Heart right ventricle (tissue), 16 donors: ENCODE measurements at regions of chr3 and their contacts with region 1.

Region 1: DNA sequence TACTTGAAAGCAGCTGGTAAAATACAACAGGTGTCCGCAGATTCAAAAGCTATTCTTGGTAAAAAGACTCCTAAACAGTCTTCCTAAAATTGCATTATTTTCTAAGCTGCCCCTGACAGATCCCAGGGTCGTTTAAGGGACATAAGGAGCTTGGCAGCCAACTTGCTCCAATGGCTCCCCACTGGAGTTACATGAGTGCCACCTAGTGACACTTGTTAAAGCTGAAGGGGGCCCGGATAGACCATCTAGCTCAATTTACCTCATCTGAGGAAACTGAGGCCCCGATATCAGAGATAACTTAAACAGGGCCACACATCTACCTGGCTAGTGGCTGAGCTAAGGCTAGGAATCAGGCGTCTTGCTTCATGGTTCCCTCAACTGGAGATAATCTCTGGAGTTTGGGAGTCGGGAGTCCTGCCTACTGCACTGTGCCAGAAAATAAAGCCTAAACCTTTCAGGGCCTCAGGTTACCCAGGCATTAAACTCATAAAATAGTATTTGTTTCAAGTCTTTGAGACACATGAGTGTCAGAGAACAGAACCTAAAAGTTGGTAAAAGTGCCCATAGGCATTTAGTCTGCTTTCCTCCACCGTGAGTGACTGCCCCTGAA is 6.5 kb upstream of the TBC1D23 start:
- DNase-seq: peak; percentile 25 to 79
- ATAC-seq: peak; percentile 85 to 96 (median 92)
- H3K4me3 ChIP-seq: no peak overlapping the region
- H3K27ac ChIP-seq: peak overlapping the region in 6 of 10 donors; percentile 22 to 74 (median 53)
- H3K4me1 ChIP-seq: peaks cover 0 to 28% (median 8%) of the 10 kb centered on the region in 9 donors
- H3K27me3 ChIP-seq: no peaks in the 10 kb centered on the region
- CTCF ChIP-seq: peak; percentile 73 to 93 (median 84)

Region 2: DNA sequence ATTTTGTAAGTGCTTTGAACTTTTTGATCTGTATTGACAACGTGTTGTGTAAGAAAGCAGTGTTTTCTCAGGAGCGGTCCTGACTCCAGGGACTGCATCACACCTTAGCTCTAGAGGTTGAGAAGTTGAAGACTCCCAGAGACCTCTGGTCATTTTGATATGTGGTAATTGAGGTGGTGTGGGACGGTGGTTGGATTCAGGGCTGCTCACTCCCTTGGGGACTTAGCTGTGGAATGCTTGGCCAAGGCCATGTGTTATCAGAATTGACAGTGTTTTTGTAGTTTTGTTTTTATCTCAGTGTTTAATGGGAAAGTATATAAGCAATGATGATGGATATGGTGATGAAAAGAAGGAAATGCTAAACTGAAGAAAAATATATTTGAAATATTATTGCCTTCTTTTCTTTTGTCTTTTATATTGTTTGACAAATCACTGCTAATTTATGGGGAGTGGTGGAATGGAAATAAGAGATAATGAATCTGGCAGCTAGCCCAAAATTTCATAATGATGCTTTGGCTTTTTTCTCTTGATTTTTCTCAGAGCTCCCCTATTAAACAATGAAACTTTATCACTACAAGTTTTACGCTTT is 420.6 kb before region 1 on chr3:
- intact Hi-C with region 1: loop called in 5 of 10 experiments (anchors 1 to 5 kb)
- DNase-seq: no peak
- ATAC-seq: no peak
- H3K4me3 ChIP-seq: no peak overlapping the region
- H3K27ac ChIP-seq: peak overlapping the region in 7 of 10 donors; percentile 5 to 62 (median 25)
- H3K4me1 ChIP-seq: peaks cover 0 to 47% (median 23%) of the 10 kb centered on the region in 9 donors
- H3K27me3 ChIP-seq: no peaks in the 10 kb centered on the region
- CTCF ChIP-seq: no peak

Region 3: GRCh38 chr3:99920481-99921376 is 333.5 kb before region 1 on chr3:
- intact Hi-C with region 1: loop called in 1 of 10 experiments (anchors 10 kb)
- DNase-seq: peak; percentile 60 to 90
- ATAC-seq: peak; percentile 61 to 89 (median 80)
- H3K4me3 ChIP-seq: no peak overlapping the region
- H3K27ac ChIP-seq: peak overlapping the region; percentile 44 to 90 (median 78)
- H3K4me1 ChIP-seq: peaks cover 3 to 50% (median 36%) of the 10 kb centered on the region in 9 donors
- H3K27me3 ChIP-seq: no peaks in the 10 kb centered on the region
- CTCF ChIP-seq: no peak

Region 4: GRCh38 chr3:99929745-99930139 is 324.5 kb before region 1 on chr3:
- intact Hi-C with region 1: loop called in 2 of 10 experiments (anchors 10 kb)
- DNase-seq: peak; percentile 23 to 43
- ATAC-seq: peak in 6 of 8 donors; percentile 26 to 51 (median 38)
- H3K4me3 ChIP-seq: no peak overlapping the region
- H3K27ac ChIP-seq: peak overlapping the region in 9 of 10 donors; percentile 11 to 76 (median 54)
- H3K4me1 ChIP-seq: peaks cover 10 to 64% (median 37%) of the 10 kb centered on the region in 9 donors
- H3K27me3 ChIP-seq: no peaks in the 10 kb centered on the region
- CTCF ChIP-seq: no peak

Region 5: GRCh38 chr3:100068826-100069225 is 185.4 kb before region 1 on chr3:
- intact Hi-C with region 1: loop called (anchors 1 to 5 kb)
- DNase-seq: peak; percentile 74 to 85
- ATAC-seq: peak; percentile 82 to 92 (median 88)
- H3K4me3 ChIP-seq: no peak overlapping the region
- H3K27ac ChIP-seq: peak overlapping the region in 5 of 10 donors; percentile 30 to 44 (median 38)
- H3K4me1 ChIP-seq: peaks cover 0 to 47% (median 19%) of the 10 kb centered on the region in 9 donors
- H3K27me3 ChIP-seq: no peaks in the 10 kb centered on the region
- CTCF ChIP-seq: peak; percentile 64 to 88 (median 78)

Region 6: GRCh38 chr3:100159331-100160153 is 94.7 kb before region 1 on chr3:
- intact Hi-C with region 1: loop called in 1 of 10 experiments (anchors 10 kb)
- DNase-seq: no peak
- ATAC-seq: peak in 5 of 8 donors; percentile 31 to 36 (median 35)
- H3K4me3 ChIP-seq: no peak overlapping the region
- H3K27ac ChIP-seq: peak overlapping the region; percentile 3 to 83 (median 65)
- H3K4me1 ChIP-seq: peaks cover 5 to 69% (median 46%) of the 10 kb centered on the region in 9 donors
- H3K27me3 ChIP-seq: no peaks in the 10 kb centered on the region
- CTCF ChIP-seq: no peak

Region 7: GRCh38 chr3:100210772-100211135 is 43.5 kb before region 1 on chr3:
- intact Hi-C with region 1: loop called in 1 of 10 experiments (anchors 5 kb)
- DNase-seq: peak in 1 of 2 donors; percentile 65
- ATAC-seq: peak in 7 of 8 donors; percentile 80 to 93 (median 85)
- H3K4me3 ChIP-seq: no peak overlapping the region
- H3K27ac ChIP-seq: peak overlapping the region; percentile 2 to 85 (median 68)
- H3K4me1 ChIP-seq: peaks cover 6 to 22% (median 21%) of the 10 kb centered on the region in 9 donors
- H3K27me3 ChIP-seq: no peaks in the 10 kb centered on the region
- CTCF ChIP-seq: no peak

Region 8: DNA sequence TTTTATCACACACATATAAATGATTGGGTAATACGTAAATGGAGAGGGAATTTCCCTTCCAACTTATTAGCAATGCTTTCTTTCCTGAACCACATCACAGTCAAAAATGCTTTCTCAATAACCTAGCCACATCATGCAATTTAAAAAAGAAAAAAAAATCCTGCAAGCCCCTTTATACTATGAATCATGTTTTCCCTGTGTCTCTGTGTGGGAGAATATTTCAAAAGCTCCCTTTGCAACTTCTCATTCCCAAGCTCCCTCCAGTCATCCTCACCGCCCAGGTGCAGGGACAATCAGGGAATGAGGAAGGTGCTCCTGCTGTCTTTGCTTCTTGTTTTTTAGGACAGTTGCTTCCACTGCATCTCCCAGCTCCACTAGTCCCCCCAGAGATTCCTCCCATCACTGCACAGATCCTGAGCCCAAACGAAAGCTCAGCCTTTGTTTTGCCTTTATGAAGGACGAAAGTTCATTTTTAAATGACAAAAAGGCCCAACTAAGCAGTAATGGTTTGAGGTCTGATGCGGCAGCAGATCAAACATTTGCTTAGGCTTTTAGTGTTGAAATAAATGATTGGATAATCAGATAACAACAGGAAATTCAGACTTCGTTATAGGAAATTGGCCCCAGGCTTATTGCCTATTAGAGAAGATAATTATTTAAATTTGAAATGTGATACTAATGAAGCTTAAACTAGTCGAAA is 307.3 kb after region 1 on chr3:
- intact Hi-C with region 1: no loop called
- DNase-seq: no peak
- ATAC-seq: peak in 1 of 8 donors; percentile 51
- H3K4me3 ChIP-seq: no peak overlapping the region
- H3K27ac ChIP-seq: peak overlapping the region in 1 of 10 donors; percentile 28
- H3K4me1 ChIP-seq: peaks cover 0 to 17% (median 0%) of the 10 kb centered on the region in 9 donors
- H3K27me3 ChIP-seq: no peaks in the 10 kb centered on the region
- CTCF ChIP-seq: no peak